Activated B cell treated with CpG ODN at 0.5 μM for 24 hours (primary cell): ENCODE measurements at regions of chr17 and their contacts with region 1.

Region 1: DNA sequence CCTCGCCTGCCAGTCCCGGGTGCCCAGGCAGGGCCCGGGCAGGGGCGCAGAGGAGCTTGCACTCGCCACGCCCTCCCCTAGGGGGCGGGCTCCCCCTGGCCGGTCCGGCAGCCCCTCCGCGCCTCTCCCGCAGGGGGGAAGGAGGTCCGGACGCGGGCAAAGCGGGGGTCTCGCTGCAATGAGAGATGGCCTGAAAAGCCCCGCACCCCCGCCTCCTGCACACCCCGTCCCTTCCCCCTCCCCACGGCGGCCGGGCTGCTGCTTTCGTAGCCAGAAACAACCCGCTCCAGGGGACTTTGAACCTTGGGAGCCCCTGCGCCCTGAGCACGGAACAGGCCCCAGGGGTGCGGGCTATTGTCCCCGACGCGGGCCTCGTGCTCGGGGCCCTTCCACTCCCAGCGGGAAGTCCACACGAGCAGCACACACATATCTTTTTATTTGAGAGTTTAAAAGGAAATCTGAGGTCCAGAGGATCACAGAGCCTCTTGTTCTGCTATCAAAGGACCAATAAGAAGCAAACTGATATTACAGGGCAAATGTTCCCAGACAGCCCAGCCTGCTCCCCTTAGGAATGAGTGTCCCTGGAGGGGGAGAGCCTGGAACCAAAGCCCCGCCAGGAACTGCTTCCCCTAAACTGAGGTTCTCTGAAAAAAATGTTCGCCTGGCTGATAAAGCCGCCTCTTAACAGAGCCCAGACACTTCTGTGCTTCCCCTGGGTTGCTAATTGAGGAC is 5.8 kb upstream of the CBX4 start:
- DNase-seq: peak; percentile 72
- ATAC-seq: peak; percentile 72
- H3K4me3 Mint-ChIP-seq: peak overlapping the region; percentile 41
- H3K27ac Mint-ChIP-seq: no peak overlapping the region
- H3K4me1 Mint-ChIP-seq: peaks cover 37% of the 10 kb centered on the region
- H3K27me3 Mint-ChIP-seq: peaks cover 26% of the 10 kb centered on the region
- CTCF ChIP-seq: no peak

Region 2: DNA sequence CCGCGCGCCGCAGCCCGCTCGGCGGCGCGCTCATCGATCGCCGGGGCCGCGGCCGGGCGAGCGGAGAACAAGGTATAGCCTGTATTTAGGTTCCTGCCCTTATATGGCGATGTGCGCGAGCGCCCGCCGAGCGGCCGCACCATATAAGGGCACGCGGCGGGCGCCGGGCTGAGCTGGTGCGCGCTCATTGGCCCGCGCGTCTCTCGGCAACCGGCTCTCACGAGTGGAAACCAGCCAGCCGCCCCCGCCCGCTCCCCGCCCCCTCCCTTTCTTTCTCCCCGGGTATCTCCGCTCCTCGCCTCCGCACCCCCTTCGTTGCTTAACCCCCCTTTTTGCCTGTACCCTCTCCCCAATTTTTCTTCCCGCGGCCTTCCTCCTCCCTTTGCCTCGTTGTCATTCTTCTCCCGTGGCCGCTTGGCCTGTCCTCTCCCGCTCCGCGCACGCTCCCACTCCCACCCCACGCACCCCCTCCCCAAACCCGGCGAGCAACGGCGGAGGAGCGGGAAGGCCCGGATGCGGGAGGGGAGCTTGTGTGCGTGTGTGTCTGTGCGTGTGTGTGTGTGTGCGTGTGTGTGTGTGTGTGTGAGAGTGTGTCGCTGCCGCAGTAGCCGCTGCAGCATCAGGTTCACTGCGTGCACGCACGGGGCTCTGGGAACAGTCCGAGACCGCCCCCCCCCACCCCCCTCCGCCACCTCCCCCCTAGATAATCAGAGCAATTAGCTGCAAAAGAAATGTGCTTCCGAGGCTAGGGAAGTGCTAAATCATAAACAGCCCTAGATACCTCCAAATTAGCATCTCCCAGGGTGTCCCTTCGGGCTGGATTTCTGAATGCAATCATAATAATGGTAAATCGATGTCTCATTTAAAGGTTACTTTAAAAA is 34.7 kb before region 1 on chr17:
- CTCF ChIA-PET with region 1: interaction called, 8 read pairs
- POLR2A ChIA-PET with region 1: interaction called, 212 read pairs
- intact Hi-C with region 1: loop called (anchors 1 kb)
- DNase-seq: no peak
- ATAC-seq: peak; percentile 86
- H3K4me3 Mint-ChIP-seq: peak overlapping the region; percentile 15
- H3K27ac Mint-ChIP-seq: peak overlapping the region; percentile 46
- H3K4me1 Mint-ChIP-seq: peaks cover 36% of the 10 kb centered on the region
- H3K27me3 Mint-ChIP-seq: peaks cover 51% of the 10 kb centered on the region
- CTCF ChIP-seq: no peak

Region 3: DNA sequence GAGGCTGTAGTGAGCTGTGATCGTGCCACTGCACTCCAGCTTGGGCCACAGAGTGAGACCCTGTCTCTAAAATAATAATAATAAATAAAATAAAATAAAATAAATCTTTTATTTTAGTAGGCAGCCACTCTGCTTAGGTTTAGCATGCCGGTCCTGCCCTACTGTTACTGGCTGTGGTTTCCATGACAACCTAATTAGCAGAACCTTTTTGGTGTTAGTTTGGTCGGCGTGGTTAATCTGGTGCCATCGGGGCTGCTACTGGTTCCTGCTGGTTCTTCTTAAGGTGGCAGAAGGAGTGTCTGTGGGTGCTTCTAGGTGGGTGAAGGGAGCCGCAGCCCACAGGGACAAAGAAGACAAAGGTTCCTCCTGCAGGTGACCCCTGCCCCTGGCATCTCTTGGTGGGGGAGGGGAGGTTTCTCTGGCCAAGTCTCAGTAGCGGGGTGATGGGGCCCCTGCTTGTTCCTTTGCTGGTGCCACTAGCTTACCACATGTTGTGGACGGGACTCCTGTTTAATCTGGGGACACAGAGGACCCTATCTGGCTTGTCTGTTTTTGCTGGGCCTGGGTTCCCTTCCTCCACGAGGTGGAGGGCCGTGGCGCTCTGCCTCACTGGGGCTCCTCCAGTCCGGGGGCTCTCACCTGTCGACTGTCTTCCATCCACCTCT is 32.1 kb after region 1 on chr17:
- CTCF ChIA-PET with region 1: no interaction called
- POLR2A ChIA-PET with region 1: no interaction called
- intact Hi-C with region 1: no loop called
- DNase-seq: no peak
- ATAC-seq: no peak
- H3K4me3 Mint-ChIP-seq: no peak overlapping the region
- H3K27ac Mint-ChIP-seq: no peak overlapping the region
- H3K4me1 Mint-ChIP-seq: peaks cover 4% of the 10 kb centered on the region
- H3K27me3 Mint-ChIP-seq: peaks cover 27% of the 10 kb centered on the region
- CTCF ChIP-seq: no peak

Region 4: DNA sequence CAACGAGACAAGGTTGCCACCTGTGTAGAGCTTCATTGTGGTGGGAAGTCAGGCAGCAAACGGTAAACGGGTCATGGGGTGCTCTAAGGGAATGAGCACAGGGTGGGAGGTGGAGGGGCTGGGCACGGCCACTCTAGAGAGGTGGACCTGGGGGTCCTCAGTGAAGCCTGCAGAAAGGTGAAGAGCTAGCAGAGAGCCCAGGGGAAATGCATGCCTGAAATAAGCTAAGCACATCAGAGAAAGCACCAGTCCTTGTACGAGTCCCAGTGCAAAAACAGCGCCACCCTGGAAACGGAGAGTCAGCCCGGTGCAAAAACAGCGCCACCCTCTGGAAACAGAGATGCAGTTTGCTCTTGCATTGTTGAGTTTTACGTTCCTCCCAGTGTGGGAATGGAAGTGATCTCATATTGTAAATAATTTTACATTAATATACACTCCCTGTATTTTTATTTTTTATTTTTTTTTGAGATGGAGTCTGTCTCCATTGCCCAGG is 125.6 kb after region 1 on chr17:
- CTCF ChIA-PET with region 1: interaction called, 23 read pairs
- POLR2A ChIA-PET with region 1: interaction called, 10 read pairs
- intact Hi-C with region 1: loop called (anchors 1 kb)
- DNase-seq: no peak
- ATAC-seq: peak; percentile 60
- H3K4me3 Mint-ChIP-seq: no peak overlapping the region
- H3K27ac Mint-ChIP-seq: no peak overlapping the region
- H3K4me1 Mint-ChIP-seq: peaks cover 29% of the 10 kb centered on the region
- H3K27me3 Mint-ChIP-seq: no peaks in the 10 kb centered on the region
- CTCF ChIP-seq: no peak

Region 5: DNA sequence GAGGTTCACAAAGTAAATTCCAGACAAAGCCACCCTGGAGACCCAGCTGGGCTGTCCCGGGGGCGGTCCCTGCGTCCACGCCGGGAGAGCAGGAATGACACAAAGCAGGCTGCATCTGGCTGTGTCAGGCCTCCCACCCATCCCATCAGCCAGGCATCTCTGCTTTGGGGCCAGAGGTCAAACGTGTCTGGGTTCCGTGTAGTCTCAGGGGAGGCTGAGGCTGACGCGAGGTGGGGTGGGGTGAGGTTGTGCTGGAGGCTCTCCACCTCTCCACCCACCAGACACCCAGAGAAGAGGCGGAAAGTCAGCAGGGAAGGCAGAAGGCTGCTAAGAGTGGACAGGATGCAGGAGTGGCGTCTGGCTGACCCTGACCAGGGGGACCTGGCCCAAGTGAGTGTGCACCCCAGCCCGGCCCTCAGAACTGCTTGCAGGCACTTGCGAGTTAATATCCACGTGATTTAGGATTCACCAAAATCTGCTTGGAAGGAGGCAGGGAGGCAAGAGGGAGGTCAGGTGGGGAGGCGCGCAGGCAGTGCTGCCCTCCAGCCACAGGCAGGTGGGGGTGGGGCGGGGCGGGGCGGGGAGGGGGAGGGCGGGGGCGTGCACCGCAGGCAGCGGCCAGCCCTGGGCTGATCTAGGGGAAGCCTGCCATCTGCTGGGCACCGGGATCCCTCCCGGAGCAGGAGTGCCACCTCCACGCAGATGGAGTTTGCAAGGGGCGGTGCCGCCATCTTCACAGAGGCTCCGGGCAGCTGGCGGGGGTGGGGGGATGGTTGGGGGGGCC is 146.3 kb after region 1 on chr17:
- CTCF ChIA-PET with region 1: no interaction called
- POLR2A ChIA-PET with region 1: interaction called, 13 read pairs
- intact Hi-C with region 1: loop called (anchors 1 kb)
- DNase-seq: peak; percentile 67
- ATAC-seq: peak; percentile 91
- H3K4me3 Mint-ChIP-seq: peak overlapping the region; percentile 69
- H3K27ac Mint-ChIP-seq: no peak overlapping the region
- H3K4me1 Mint-ChIP-seq: peaks cover 35% of the 10 kb centered on the region
- H3K27me3 Mint-ChIP-seq: peaks cover 2% of the 10 kb centered on the region
- CTCF ChIP-seq: no peak